ENCODE measurements at regions of chr3 and their contacts with region 1.

Region 1: DNA sequence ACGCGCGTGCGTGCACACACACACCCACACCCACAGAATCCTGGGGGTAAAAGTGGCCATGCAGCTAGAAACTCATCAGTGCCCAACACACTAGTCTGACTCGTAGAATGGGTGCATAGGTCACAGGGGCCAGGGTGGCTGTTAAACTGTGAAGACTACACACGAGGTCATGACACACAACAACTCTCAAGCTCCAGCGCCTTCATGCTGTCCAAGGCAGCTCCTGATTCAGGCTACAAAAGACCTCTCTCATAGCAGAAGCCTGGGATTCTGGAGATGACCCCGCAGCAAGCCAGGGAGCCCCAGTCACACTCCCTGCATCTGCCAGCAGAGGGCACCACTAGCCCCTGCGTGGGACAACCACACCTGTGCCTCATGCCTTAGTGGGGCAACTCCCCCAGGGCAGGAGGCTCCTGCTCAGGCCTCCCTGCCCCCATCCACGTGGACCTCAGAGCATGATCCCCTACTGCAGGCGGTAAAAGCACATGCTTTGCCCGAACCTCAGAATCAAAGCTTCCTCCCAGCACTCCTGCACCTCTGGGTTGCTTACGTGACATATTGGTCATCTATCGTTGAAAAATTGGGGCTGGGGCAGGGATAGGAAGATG is 93.1 kb downstream of the LRIG1 start:
- DNase-seq: peak in 3 of 4 donors; percentile 29 to 91 (median 53)
- ATAC-seq: peak; percentile 91
- H3K4me3 ChIP-seq: no peak overlapping the region
- H3K27ac ChIP-seq: no peak overlapping the region
- H3K4me1 ChIP-seq: peaks cover 0 to 8% of the 10 kb centered on the region in 2 donors
- H3K27me3 ChIP-seq: no peaks in the 10 kb centered on the region
- CTCF ChIP-seq: peak; percentile 88 to 90

Region 2: GRCh38 chr3:66038726-66039589 is 368.8 kb before region 1 on chr3 and contains the start of gene MAGI1:
- intact Hi-C with region 1: no loop called
- DNase-seq: peak; percentile 89 to 96 (median 92)
- ATAC-seq: peak; percentile 84
- H3K4me3 ChIP-seq: peak within 1 kb of the TSS; percentile 61 to 78
- H3K27ac ChIP-seq: peak within 1 kb of the TSS; percentile 88 to 95
- H3K4me1 ChIP-seq: peaks cover 0 to 6% of the 10 kb centered on the region in 2 donors
- H3K27me3 ChIP-seq: peaks cover 0 to 50% of the 10 kb centered on the region in 2 donors
- CTCF ChIP-seq: no peak
- polyA plus RNA-seq, gene MAGI1: 25.4 to 32.0 (median 28.7) TPM

Region 3: DNA sequence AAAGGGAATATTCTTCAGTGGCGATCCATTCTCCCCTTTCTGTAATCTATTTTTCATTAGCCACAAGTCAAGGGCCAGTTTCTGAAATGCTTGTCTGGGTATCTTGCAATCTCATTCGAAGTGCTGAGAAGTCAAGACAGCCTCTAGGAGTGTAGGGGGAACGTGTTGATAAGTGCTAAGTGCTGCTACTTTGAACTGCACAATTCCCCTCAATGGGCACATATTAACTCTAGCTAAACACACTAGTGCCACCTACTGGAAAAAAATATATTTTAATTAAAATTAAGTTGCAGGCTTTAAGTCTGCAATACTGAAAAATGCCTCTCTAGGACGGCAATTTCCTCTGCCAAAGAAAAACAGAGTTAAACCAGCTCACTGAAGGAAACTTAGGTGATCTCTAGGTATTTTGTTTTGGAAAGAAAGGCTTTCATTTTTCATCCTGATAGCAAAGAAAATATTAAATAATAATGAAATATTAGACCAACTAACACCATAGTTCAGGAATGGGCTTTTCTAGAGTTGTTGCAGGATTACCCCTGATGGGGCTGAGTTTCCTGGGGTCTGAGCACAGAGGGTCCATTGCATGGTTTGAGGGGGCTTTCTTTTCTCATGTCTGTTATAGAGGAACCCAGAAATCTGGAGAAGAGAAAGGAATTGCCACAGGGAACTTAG is 408.5 kb after region 1 on chr3:
- intact Hi-C with region 1: loop called in 1 of 2 experiments (anchors 10 kb)
- DNase-seq: peak in 2 of 4 donors; percentile 19 to 54
- ATAC-seq: peak; percentile 94
- H3K4me3 ChIP-seq: no peak overlapping the region
- H3K27ac ChIP-seq: no peak overlapping the region
- H3K4me1 ChIP-seq: no peaks in the 10 kb centered on the region
- H3K27me3 ChIP-seq: no peaks in the 10 kb centered on the region
- CTCF ChIP-seq: peak; percentile 28 to 52